Body of pancreas (tissue), 4 donors: ENCODE measurements at regions of chr22 and their contacts with region 1.

Region 1: GRCh38 chr22:40679964-40680818 is 907 bp downstream of the MCHR1 start:
- DNase-seq: no peak
- ATAC-seq: no peak
- H3K4me3 ChIP-seq: no peak overlapping the region
- H3K27ac ChIP-seq: no peak overlapping the region
- H3K4me1 ChIP-seq: peaks cover 6% of the 10 kb centered on the region
- H3K27me3 ChIP-seq: no peaks in the 10 kb centered on the region
- CTCF ChIP-seq: no peak
- POLR2A ChIP-seq: no peak

Region 2: GRCh38 chr22:40898850-40899357 is 218.7 kb after region 1 on chr22:
- intact Hi-C with region 1: loop called (anchors 10 kb)
- DNase-seq: peak in 1 of 4 donors; percentile 3
- ATAC-seq: peak; percentile 47
- H3K4me3 ChIP-seq: no peak overlapping the region
- H3K27ac ChIP-seq: no peak overlapping the region
- H3K4me1 ChIP-seq: no peaks in the 10 kb centered on the region
- H3K27me3 ChIP-seq: no peaks in the 10 kb centered on the region
- CTCF ChIP-seq: peak in 5 of 7 experiments; percentile 33 to 56 (median 44)
- POLR2A ChIP-seq: no peak